GM10248 (cell line): ENCODE measurements at regions of chr11 and their contacts with region 1.

Region 1: GRCh38 chr11:128884703-128885338 is 6.3 kb upstream of the KCNJ5 start:
- DNase-seq: peak; percentile 73
- CTCF ChIP-seq: peak; percentile 74

Region 2: DNA sequence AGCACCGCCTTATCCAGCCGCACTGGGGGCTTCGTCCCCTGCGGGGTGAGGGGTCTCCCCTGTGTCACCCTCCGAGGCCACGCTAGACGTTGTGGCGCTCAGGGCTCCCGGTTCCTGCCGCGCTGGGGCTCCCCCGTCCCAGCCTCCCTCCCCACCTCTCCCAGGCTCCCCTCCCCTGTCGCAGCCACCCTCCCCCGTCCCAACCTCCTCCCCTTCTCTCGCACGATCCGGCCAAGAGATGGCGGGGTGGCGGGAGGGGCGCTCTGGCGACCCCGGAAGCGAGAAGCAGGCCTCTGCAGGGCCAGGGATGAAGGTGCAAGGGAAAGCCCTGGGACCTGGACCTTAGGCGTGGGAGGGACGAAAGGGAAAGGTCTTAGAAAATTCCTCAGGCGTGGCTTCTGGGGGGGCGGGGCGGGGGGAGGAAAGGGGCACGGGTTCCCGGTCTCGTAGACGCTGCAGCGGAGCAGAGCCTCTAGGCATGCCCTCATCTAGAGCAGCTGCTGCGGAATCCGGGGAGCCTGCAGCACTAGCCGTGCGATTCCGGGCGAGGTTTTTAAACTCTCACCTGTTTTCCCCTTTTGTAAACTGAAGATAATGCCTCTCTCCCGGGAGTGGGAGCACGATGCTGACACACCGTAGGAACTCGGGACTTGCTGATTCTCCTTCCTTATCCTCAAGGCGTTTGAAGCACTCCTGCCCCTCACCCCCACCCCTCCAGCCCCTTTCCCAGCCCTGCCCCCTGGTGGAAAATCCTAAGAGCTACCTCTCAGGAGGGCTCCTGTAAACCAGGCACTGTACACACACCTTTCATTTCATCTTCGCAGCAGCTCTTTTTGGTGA is 20.7 kb after region 1 on chr11:
- CTCF ChIA-PET with region 1: interaction called, 45 read pairs
- POLR2A ChIA-PET with region 1: interaction called, 5 read pairs
- DNase-seq: peak; percentile 61
- CTCF ChIP-seq: peak; percentile 24

Region 3: DNA sequence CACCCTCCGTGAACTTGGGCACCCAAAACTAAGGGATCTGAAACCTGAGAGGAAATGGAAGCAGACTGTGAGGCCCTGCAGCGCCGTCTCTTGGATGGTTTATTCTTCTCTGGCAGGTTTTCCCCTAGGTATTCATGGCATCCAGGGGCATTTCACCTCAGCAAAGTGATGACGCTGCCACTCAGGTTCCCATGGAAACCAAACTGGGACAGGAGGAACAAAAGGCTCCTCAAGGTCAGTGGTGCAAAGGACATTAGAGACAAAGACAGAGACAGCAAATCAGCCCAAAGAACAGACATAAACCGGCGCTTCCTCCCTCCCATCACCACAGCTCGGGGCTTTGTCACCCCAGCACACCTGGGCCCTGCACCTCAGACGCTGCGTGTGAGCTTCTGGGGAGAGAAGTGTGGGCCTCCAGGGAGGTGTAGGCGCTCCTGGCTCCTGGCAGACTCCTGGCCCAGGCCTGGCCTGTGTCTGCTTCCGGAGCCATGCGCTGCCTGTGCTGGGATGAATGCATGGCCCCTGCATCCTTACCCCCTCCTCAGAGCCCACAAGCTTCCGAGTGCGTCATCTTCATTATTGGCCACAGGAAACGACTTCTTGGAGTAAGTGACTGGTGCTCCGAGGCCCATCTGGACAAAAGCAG is 51.9 kb after region 1 on chr11:
- CTCF ChIA-PET with region 1: interaction called, 12 read pairs
- POLR2A ChIA-PET with region 1: no interaction called
- DNase-seq: no peak
- CTCF ChIP-seq: no peak

Region 4: DNA sequence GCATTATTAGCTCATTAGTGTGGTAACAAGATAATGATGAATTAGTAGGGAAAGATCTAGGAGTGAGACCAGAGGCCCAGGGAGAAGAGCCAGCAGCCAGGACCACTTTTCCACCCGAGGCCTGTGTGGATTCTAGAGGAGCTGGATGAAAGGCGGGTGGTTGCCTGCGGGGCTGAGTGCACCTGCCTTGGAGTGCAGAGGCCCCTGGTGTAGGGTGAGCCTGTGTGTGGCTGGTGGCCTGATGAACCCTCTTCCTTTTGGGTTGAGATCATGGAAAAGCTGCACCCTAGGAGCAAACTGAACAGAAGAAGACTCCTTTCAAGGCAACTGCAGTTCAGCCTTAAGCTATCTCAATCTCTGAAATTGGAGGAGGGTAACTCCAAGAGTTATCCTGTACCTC is 63.8 kb after region 1 on chr11:
- CTCF ChIA-PET with region 1: interaction called, 198 read pairs
- POLR2A ChIA-PET with region 1: no interaction called
- DNase-seq: no peak
- CTCF ChIP-seq: peak; percentile 10

Region 5: GRCh38 chr11:128956401-128957201 is 71.8 kb after region 1 on chr11:
- CTCF ChIA-PET with region 1: interaction called, 198 read pairs
- POLR2A ChIA-PET with region 1: no interaction called
- DNase-seq: peak; percentile 59
- CTCF ChIP-seq: peak; percentile 39

Region 6: DNA sequence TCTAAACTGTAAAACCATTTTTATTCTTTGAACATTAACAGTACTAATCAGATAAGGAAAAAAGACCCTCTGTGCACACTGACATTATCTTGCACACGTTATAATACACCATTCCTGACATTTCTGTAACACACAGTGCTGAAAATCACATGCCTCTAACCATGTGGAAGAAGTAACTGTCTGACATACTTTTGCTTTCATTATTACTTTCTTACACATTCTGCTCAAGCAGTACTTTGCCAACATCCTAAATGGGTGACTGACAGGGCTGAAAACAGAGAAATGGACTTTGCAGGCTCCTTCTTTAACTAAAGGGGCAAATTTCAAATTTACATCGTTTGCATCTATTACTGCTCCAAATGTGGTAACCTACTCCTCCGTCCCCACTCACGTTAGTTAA is 80.7 kb after region 1 on chr11:
- CTCF ChIA-PET with region 1: interaction called, 198 read pairs
- POLR2A ChIA-PET with region 1: no interaction called
- DNase-seq: peak; percentile 58
- CTCF ChIP-seq: no peak